PC-9 (cell line): ENCODE measurements at regions of chr1 and their contacts with region 1.

Region 1: GRCh38 chr1:10378081-10378841 is 20.6 kb upstream of the PGD start:
- DNase-seq: peak; percentile 86 to 96
- H3K4me3 ChIP-seq: peak overlapping the region; percentile 42; the same call in 1 of the 2 replicates
- H3K27ac ChIP-seq: peak overlapping the region; percentile 95
- H3K4me1 ChIP-seq: peaks cover 39% of the 10 kb centered on the region
- H3K27me3 ChIP-seq: no peaks in the 10 kb centered on the region
- CTCF ChIP-seq: no peak

Region 2: GRCh38 chr1:10085061-10085460 is 293.2 kb before region 1 on chr1:
- CTCF ChIA-PET with region 1: interaction called, 13 read pairs
- POLR2A ChIA-PET with region 1: no interaction called
- intact Hi-C with region 1: no loop called
- DNase-seq: peak in 1 of 2 experiments; percentile 20
- H3K4me3 ChIP-seq: no peak overlapping the region
- H3K27ac ChIP-seq: no peak overlapping the region
- H3K4me1 ChIP-seq: no peaks in the 10 kb centered on the region
- H3K27me3 ChIP-seq: no peaks in the 10 kb centered on the region
- CTCF ChIP-seq: no peak

Region 3: GRCh38 chr1:10398734-10399623 is 20.7 kb after region 1 on chr1 and contains the start of gene PGD:
- CTCF ChIA-PET with region 1: no interaction called
- POLR2A ChIA-PET with region 1: interaction called, 3 read pairs
- intact Hi-C with region 1: loop called (anchors 1 kb)
- DNase-seq: peak; percentile 88 to 98
- H3K4me3 ChIP-seq: peak within 1 kb of the TSS; percentile 94
- H3K27ac ChIP-seq: peak within 1 kb of the TSS; percentile 89
- H3K4me1 ChIP-seq: peaks cover 25% of the 10 kb centered on the region
- H3K27me3 ChIP-seq: no peaks in the 10 kb centered on the region
- CTCF ChIP-seq: no peak
- total RNA-seq, gene PGD: 526 and 559 TPM in 2 replicates

Region 4: DNA sequence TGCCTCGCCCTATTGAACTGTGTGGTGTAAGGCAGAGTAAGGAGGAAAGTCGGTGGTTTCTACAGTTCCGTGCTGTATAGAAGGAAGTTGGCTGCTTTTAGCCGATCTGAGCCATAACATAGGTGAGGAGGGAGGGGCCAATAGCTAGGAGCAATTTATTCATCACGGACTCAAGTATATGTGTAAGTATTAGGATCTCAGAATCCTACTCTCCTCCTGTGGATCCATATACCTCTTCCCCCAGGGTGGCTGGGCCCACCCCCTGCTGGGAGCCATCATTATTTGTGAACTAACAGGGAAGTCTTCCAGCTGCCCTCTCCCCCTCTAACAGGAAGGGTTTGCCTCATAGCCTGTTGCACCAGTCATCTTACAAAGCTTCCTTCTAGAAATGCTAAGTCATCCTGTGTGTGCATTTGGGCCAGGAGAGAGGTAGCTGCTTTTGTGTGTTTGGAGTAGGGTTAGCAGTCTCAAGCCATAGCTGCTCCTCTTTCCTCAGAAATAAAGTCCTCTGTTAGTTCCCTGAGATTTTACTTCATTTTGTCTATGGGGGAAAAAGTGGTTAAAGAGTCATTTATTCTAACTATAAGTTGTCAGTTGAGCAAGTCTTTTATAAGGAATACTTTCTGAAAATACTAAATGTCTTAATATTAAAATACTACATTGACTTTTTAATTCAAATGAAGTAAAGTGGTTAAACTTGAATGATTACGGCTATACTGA is 37.1 kb after region 1 on chr1:
- CTCF ChIA-PET with region 1: interaction called, 3 read pairs
- POLR2A ChIA-PET with region 1: no interaction called
- intact Hi-C with region 1: loop called (anchors 1 kb)
- DNase-seq: peak; percentile 87 to 96
- H3K4me3 ChIP-seq: peak overlapping the region; percentile 33; the same call in 1 of the 2 replicates
- H3K27ac ChIP-seq: peak overlapping the region; percentile 100
- H3K4me1 ChIP-seq: peaks cover 52% of the 10 kb centered on the region
- H3K27me3 ChIP-seq: no peaks in the 10 kb centered on the region
- CTCF ChIP-seq: no peak